Psoas muscle (tissue), 8 donors: ENCODE measurements at regions of chr5 and their contacts with region 1.

Region 1: DNA sequence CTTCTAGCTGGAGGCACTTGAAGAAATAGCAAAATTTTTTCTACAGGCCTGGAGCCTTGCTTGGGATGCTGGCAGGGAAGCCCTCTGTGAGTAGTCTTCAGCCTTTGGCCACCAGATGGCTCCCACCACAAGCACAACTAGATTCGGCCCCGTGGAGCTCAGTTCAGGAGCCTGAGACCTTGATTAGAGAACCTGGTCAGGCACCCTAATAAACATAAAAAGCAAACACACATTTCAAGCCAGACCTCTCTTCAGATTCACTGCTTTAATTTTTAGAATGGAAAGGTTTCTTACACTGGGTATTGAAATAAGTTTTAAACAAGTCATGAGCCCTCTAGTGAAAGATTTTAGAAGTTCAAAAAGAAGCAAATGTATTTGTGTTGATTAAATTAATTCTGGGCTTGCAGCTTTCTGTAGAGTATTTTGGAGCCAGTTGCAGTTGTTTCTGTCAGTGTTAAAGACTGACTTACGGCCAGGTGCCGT is 41.4 kb downstream of the GLRX start:
- DNase-seq: peak; percentile 80 to 88
- ATAC-seq: peak; percentile 79 to 88 (median 82)
- H3K4me3 ChIP-seq: no peak overlapping the region
- H3K27ac ChIP-seq: peak overlapping the region; percentile 73
- H3K4me1 ChIP-seq: peaks cover 49% of the 10 kb centered on the region
- H3K27me3 ChIP-seq: no peaks in the 10 kb centered on the region
- CTCF ChIP-seq: peak; percentile 88

Region 2: DNA sequence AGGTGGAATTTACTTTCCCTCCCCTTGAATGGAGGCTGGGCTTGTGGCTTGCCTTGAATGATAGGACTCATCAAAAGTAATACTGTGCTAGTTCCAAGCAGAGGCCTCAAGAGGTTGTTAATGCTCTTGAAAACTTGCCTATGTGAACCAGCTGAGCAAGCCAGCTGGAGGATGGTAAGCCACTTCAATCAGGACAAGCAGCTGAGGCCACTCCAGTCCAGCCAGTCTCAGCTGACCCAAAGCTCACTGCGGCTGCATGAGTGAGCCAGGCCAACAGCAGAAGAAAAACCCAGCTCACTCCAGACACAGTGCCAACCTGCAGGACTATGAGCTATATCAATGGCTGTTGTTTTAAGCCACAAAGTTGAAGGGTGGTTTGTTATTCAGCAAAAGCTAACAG is 679.1 kb before region 1 on chr5:
- intact Hi-C with region 1: no loop called
- DNase-seq: no peak
- ATAC-seq: no peak
- H3K4me3 ChIP-seq: no peak overlapping the region
- H3K27ac ChIP-seq: no peak overlapping the region
- H3K4me1 ChIP-seq: no peaks in the 10 kb centered on the region
- H3K27me3 ChIP-seq: no peaks in the 10 kb centered on the region
- CTCF ChIP-seq: no peak

Region 3: GRCh38 chr5:95194856-95195255 is 586.3 kb before region 1 on chr5:
- intact Hi-C with region 1: no loop called
- DNase-seq: no peak
- ATAC-seq: no peak
- H3K4me3 ChIP-seq: no peak overlapping the region
- H3K27ac ChIP-seq: no peak overlapping the region
- H3K4me1 ChIP-seq: no peaks in the 10 kb centered on the region
- H3K27me3 ChIP-seq: no peaks in the 10 kb centered on the region
- CTCF ChIP-seq: no peak

Region 4: DNA sequence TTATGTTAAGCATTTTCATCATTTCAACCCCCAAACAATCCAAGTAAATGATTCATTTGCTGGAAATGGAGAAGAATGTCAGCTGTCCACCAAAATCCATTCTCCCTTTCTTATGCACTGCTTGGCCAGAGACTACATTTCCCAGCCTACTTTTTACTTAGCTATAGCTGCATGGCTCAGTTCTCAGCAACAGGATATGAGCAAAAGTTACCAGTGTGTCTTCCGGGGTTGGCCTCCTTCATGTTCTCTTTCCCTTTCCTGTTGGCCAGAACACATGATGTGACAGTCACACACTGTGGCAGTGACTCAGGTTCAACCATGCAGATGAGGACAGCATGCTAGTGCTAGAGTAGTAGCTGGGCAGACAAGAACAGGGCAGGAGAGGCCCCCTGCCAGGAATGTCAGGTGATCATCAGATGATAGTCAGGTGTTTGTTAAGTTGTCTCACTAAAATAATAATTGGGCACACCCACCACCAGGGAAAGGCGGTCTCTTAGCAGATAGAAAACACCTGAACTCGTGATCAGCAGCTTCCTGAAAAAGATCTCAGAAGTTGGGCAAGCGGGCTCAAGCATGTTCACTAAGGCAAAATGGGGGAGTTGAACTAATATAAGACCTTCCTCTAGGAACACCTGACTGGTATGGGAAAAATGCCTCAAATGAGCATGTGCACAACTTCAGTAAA is 149.0 kb before region 1 on chr5:
- intact Hi-C with region 1: no loop called
- DNase-seq: no peak
- ATAC-seq: peak in 3 of 4 donors; percentile 53 to 68 (median 64)
- H3K4me3 ChIP-seq: no peak overlapping the region
- H3K27ac ChIP-seq: no peak overlapping the region
- H3K4me1 ChIP-seq: peaks cover 3% of the 10 kb centered on the region
- H3K27me3 ChIP-seq: peaks cover 0 to 2% (median 0%) of the 10 kb centered on the region in 3 donors
- CTCF ChIP-seq: no peak

Region 5: DNA sequence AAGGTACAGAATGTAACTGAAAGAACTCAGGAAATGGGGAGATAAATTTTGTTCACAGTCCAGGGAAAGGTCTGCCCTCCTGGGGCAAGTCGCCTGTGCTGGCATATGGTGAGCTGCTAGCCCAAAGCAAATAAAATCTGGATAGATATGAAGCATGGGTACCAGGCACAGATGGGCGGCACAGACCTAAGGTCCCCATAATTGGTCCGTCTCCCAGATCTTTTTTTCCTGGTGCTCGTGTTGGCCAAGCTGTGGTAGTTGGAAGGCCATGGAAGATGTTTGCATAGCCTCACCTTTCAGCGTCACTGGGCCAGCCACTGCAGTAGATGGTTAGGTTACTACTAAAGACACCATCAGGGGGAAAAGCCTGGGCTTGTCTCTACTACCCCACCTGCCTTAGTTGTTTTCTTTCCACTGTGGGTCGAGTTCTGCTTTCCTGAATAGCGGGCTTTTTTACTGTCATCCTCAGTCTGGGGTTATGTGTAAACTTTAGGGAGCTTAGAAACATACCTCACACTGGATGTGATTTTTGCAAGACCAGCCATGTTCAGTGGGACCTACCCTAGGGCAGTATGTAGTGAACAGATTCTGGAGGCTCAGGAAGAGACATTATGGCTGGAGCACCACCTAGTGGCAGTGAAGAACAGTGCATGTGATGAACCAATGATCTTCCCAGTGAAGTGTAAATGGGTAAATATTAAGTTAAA is 65.6 kb after region 1 on chr5:
- intact Hi-C with region 1: loop called (anchors 1 to 2 kb)
- DNase-seq: peak; percentile 64 to 71
- ATAC-seq: peak; percentile 52 to 74 (median 66)
- H3K4me3 ChIP-seq: no peak overlapping the region
- H3K27ac ChIP-seq: peak overlapping the region; percentile 4
- H3K4me1 ChIP-seq: peaks cover 15% of the 10 kb centered on the region
- H3K27me3 ChIP-seq: no peaks in the 10 kb centered on the region
- CTCF ChIP-seq: peak; percentile 98

Region 6: DNA sequence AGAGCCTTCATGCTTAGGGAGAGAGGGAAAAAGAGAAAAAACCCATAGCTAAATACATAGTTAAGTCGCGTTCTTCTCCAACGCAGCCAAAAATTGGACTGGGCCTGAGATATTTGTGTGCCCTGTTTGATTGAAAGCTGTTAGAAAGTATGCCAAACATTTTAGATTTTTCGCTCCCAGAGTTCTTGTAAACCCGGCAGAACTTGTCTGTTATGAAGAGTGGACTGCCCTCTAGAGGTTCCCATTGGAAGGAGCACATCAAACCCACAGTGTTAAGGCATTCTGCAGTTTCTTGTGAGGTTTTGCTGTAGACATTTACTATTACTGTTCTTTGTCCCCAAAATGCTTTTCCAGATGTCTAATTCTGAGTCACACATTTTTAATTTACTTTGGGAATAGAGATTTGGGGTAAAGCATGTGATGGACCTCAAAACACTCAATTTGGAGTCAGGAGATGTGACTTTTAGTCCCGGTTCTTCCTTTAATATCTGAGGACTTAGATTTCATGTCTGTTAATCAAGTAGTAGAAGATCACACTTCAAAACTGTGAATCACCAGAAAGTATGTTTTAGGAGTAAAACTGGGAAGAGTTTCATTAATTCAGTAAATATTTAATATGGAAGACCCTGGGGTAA is 555.3 kb after region 1 on chr5:
- intact Hi-C with region 1: loop called in 1 of 2 experiments (anchors 2 kb)
- DNase-seq: peak in 1 of 2 donors; percentile 21
- ATAC-seq: peak; percentile 73 to 79 (median 76)
- H3K4me3 ChIP-seq: peak overlapping the region; percentile 35
- H3K27ac ChIP-seq: peak overlapping the region; percentile 85
- H3K4me1 ChIP-seq: peaks cover 40% of the 10 kb centered on the region
- H3K27me3 ChIP-seq: no peaks in the 10 kb centered on the region
- CTCF ChIP-seq: peak; percentile 92

Region 7: GRCh38 chr5:96402500-96402899 is 621.4 kb after region 1 on chr5:
- intact Hi-C with region 1: no loop called
- DNase-seq: no peak
- ATAC-seq: no peak
- H3K4me3 ChIP-seq: no peak overlapping the region
- H3K27ac ChIP-seq: no peak overlapping the region
- H3K4me1 ChIP-seq: no peaks in the 10 kb centered on the region
- H3K27me3 ChIP-seq: no peaks in the 10 kb centered on the region
- CTCF ChIP-seq: no peak